ENCODE measurements at regions of chr3 and their contacts with region 1.

Region 1: DNA sequence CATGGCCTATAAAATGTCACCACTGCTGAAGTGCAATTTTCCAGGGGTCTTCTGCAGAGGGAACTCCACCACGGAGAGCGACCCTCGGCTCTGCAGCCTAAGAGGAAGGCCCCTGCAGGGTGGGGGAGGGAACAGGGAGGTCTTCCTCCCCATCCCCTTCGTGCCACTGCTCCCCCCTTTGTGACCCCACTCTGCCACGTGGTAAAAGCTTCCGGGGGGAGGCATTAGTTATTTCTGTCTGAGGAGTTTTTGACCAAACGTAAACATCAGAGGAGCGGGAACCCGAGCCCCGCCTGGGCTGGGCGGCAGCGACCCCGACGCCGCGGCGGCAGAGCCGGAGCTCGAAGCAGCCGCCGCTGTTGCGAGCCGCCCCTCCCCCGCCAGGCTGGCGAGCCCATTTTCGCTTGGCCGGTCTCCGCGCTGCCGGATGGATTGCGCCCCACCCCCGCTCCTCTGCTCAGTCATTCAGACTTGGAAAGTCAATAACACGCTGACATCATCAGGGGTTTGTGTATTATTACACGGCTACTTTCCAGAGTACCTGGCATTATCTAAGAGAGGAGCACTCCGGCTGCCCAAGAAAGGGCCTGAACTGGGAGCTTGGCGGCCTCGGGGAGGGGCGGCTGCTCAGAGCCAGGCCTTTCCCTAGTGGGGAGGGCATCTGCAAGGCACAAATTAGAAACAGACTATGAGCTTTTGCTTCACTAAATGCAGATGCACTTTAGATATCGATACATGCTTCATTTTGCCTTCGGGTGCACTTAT is 162.5 kb upstream of the TBL1XR1 start:
- DNase-seq: peak; percentile 97
- ATAC-seq: peak; percentile 94 to 96
- H3K4me3 ChIP-seq: peak overlapping the region; percentile 50
- H3K27ac ChIP-seq: peak overlapping the region; percentile 91
- H3K4me1 ChIP-seq: peaks cover 55% of the 10 kb centered on the region
- H3K27me3 ChIP-seq: no peaks in the 10 kb centered on the region
- CTCF ChIP-seq: no peak

Region 2: GRCh38 chr3:177041021-177041729 is 318.6 kb before region 1 on chr3:
- intact Hi-C with region 1: loop called (anchors 10 kb)
- DNase-seq: no peak
- ATAC-seq: peak; percentile 67 to 83
- H3K4me3 ChIP-seq: no peak overlapping the region
- H3K27ac ChIP-seq: peak overlapping the region; percentile 27
- H3K4me1 ChIP-seq: peaks cover 17% of the 10 kb centered on the region
- H3K27me3 ChIP-seq: no peaks in the 10 kb centered on the region
- CTCF ChIP-seq: no peak

Region 3: GRCh38 chr3:177197041-177197727 is 162.6 kb before region 1 on chr3 and contains the start of gene TBL1XR1:
- intact Hi-C with region 1: loop called (anchors 5 kb)
- DNase-seq: peak; percentile 92
- ATAC-seq: peak; percentile 85 to 91
- H3K4me3 ChIP-seq: peak within 1 kb of the TSS; percentile 74
- H3K27ac ChIP-seq: peak within 1 kb of the TSS; percentile 94
- H3K4me1 ChIP-seq: peaks cover 35% of the 10 kb centered on the region
- H3K27me3 ChIP-seq: no peaks in the 10 kb centered on the region
- CTCF ChIP-seq: no peak
- total RNA-seq, gene TBL1XR1: 160 TPM

Region 4: DNA sequence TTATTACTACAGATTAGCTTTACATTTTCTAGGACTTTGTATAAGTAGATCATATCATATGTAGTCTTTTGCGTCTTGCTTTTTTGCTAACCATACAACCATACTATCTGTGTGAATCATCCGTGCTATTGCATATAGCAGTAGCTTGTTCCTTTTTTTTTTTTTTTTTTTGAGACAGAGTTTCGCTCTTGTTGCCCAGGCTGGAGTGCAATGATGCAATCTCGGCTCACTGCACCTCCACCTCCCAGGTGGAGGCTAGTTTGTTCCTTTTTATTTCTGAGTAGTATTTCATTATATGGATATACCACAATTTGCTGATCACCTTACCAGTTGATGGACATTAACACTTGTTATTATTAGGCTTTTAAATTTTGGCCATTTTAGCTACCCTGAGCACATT is 108.0 kb before region 1 on chr3:
- intact Hi-C with region 1: no loop called
- DNase-seq: no peak
- ATAC-seq: no peak
- H3K4me3 ChIP-seq: no peak overlapping the region
- H3K27ac ChIP-seq: no peak overlapping the region
- H3K4me1 ChIP-seq: no peaks in the 10 kb centered on the region
- H3K27me3 ChIP-seq: no peaks in the 10 kb centered on the region
- CTCF ChIP-seq: no peak

Region 5: DNA sequence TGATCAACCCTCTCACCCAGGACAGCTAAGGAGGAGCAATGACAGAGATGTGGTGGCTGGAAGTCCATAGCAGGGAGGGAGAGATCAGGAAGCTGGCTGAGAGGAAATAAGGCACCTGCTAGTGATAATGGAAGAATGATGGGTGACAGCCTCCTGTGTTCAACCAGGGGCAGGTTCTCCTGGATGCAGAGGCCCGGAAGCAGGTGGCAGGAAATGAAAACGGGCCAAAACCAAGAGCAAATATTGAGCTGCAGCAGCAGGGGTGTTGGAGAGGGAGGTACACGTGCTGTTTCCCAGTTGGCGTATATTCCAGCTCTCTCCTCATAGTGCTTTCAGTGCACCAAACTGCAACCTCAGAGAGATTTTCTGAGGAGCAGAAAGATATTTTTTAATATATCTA is 51.0 kb after region 1 on chr3:
- intact Hi-C with region 1: no loop called
- DNase-seq: no peak
- ATAC-seq: peak; percentile 46 to 69
- H3K4me3 ChIP-seq: no peak overlapping the region
- H3K27ac ChIP-seq: no peak overlapping the region
- H3K4me1 ChIP-seq: peaks cover 7% of the 10 kb centered on the region
- H3K27me3 ChIP-seq: no peaks in the 10 kb centered on the region
- CTCF ChIP-seq: no peak

Measured in lower lobe of right lung (tissue), 2 donors.